ENCODE measurements at regions of chr9 and their contacts with region 1.

Region 1: DNA sequence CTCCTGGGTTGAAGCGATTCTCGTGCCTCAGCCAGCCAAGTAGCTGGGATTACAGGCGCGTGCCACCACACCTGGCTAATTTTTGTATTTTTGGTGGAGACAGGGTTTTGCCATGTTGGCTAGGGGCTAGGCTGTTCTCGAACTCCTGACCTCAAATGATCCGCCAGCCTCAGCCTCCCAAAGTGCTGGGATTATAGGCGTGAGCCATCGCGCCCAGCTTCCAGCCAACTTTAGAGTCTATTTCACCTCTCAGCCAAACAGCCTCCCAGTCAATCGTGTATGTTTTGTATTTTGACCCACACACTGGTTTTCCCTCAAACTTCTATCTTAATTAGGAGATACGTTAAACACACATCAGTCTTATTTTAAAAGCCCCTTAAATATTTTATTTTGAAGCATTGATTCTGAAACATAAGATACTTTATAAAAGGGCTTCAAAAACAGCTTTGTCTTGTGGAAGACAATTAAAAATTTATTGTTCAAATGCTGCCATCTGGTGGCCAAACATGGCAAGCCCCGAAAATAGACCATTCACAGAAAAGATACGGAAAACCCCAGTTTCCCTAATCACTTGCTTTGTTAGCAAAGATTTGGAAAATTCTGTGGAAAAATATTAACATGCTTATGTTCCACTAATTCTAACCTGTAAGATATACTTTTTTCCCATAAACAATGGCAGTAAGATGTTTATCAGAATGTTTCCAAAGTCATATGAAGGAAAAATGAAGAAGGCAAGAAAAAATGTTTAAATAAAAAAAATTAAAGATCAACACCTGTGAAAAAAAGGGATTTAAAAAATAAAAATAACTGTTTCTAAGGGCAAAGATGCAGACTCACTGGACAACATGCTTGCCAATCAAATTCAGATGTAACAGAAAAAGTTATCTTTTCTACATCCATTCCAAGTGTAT is 33.1 kb downstream of the APTX start:
- DNase-seq: peak in 6 of 7 donors; percentile 44 to 86 (median 68)
- H3K4me3 ChIP-seq: no peak overlapping the region
- H3K27ac ChIP-seq: no peak overlapping the region
- H3K4me1 ChIP-seq: no peaks in the 10 kb centered on the region
- H3K27me3 ChIP-seq: no peaks in the 10 kb centered on the region
- CTCF ChIP-seq: peak; percentile 63 to 84 (median 69)
- POLR2A ChIP-seq: no peak

Region 2: GRCh38 chr9:32378993-32379729 is 589.2 kb before region 1 on chr9:
- intact Hi-C with region 1: loop called in 1 of 2 experiments (anchors 5 kb)
- DNase-seq: peak in 6 of 7 donors; percentile 55 to 72 (median 58)
- H3K4me3 ChIP-seq: no peak overlapping the region
- H3K27ac ChIP-seq: no peak overlapping the region
- H3K4me1 ChIP-seq: peaks cover 4 to 12% of the 10 kb centered on the region in 2 donors
- H3K27me3 ChIP-seq: no peaks in the 10 kb centered on the region
- CTCF ChIP-seq: peak; percentile 55 to 96 (median 84)
- POLR2A ChIP-seq: no peak

Region 3: GRCh38 chr9:32550562-32551433 is 417.6 kb before region 1 on chr9:
- intact Hi-C with region 1: no loop called
- DNase-seq: peak; percentile 91 to 98 (median 94)
- H3K4me3 ChIP-seq: peak overlapping the region; percentile 10 to 86 (median 66)
- H3K27ac ChIP-seq: peak overlapping the region; percentile 92 to 99 (median 96)
- H3K4me1 ChIP-seq: peaks cover 0 to 27% of the 10 kb centered on the region in 2 donors
- H3K27me3 ChIP-seq: no peaks in the 10 kb centered on the region
- CTCF ChIP-seq: no peak
- POLR2A ChIP-seq: peak in 1 of 2 donors; percentile 53

Region 4: GRCh38 chr9:34072868-34073590 is 1104.7 kb after region 1 on chr9:
- intact Hi-C with region 1: no loop called
- DNase-seq: peak in 4 of 7 donors; percentile 28 to 57 (median 33)
- H3K4me3 ChIP-seq: no peak overlapping the region
- H3K27ac ChIP-seq: peak overlapping the region in 3 of 5 donors; percentile 31 to 52 (median 38)
- H3K4me1 ChIP-seq: peaks cover 11 to 12% of the 10 kb centered on the region in 2 donors
- H3K27me3 ChIP-seq: no peaks in the 10 kb centered on the region
- CTCF ChIP-seq: no peak
- POLR2A ChIP-seq: no peak